Head of caudate nucleus (tissue), 42 donors: ENCODE measurements at regions of chr4 and their contacts with region 1.

Region 1: GRCh38 chr4:81471588-81472288 is at the start of gene RASGEF1B:
- DNase-seq: peak; percentile 82 to 98 (median 95)

Region 2: GRCh38 chr4:81523672-81524327 is 52.1 kb after region 1 on chr4:
- intact Hi-C with region 1: loop called (anchors 10 kb)
- DNase-seq: peak in 2 of 42 donors; percentile 54 to 66

Region 3: GRCh38 chr4:82268050-82268825 is 796.5 kb after region 1 on chr4:
- intact Hi-C with region 1: loop called (anchors 5 kb)
- DNase-seq: peak; percentile 14 to 86 (median 66)